ENCODE measurements at regions of chr1 and their contacts with region 1.

Region 1: DNA sequence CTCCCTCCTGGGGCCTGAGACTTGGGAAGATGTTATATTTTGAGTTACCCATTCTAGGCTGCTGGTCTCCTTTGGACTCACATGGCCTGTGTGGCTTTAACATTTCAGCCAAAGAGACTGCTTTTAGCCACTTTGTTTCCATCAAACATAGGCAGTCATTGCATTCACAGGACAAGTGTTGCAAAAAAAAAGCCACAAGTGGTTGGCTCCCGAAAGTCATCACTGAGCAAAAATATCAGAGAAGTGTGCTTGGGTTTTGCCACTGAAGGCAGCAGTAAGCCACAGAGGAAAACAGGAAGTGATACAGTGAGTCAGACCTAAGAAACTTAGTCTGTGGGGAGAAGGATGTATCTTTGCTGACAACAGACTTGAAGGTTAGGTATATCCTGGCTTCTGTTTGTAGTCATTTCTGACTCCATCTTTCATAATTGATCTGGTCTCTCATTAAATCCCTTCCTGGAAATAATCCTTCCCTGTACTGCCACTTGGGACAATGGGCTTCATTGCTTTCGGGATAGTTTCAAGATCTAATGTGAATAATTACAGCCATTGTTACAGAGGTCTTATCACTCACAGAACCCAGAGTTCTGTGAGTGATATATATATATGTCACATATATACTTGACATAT is 80.9 kb downstream of the COLGALT2 start:
- DNase-seq: peak; percentile 73
- ATAC-seq: peak; percentile 97
- H3K4me3 Mint-ChIP-seq: peak overlapping the region; percentile 13
- H3K27ac Mint-ChIP-seq: no peak overlapping the region
- H3K4me1 Mint-ChIP-seq: peaks cover 23% of the 10 kb centered on the region
- H3K27me3 Mint-ChIP-seq: no peaks in the 10 kb centered on the region
- CTCF ChIP-seq: no peak

Region 2: DNA sequence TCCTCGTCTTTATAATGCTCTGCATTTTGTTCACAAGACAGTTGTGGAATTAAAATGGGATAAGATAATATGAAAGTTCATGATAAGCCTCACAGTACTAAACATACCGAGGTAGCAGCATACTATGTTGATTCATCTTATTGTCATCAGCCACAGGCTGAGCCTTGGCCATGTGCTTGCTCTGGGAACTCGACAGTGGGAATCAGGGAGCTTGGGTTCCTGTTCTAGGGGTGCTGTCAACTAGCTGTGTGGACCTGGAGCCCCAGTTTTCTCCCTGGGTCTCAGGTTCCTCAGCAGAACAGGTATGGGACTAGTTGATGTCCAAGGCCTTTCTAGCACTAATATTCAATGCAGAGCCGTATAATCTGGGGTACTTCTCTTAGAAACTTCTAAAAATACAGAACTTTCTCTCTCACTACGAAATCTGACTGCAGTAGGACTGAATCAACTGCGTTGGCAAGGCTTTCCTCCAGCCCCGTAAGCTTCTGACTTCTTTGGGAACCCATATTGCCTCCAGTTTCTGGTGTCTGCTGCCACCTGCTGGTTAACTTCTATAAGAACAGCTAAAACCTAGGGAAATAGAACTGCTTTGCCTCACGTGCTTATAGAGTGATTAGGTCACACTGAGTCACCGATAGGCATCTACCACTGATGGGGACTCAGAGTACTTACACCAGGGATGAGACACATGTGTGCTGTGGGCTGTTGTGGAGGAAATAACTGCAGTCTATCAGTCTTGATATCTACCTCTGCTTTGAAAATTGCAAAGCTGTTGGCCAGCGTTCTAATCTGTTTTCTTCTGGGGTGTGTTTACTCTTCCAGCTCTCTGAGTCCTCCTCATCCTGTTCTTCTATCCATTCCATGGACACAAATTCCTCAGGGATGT is 40.8 kb before region 1 on chr1:
- CTCF ChIA-PET with region 1: interaction called, 10 read pairs
- POLR2A ChIA-PET with region 1: no interaction called
- intact Hi-C with region 1: no loop called
- DNase-seq: peak; percentile 79
- ATAC-seq: peak; percentile 99
- H3K4me3 Mint-ChIP-seq: no peak overlapping the region
- H3K27ac Mint-ChIP-seq: no peak overlapping the region
- H3K4me1 Mint-ChIP-seq: peaks cover 24% of the 10 kb centered on the region
- H3K27me3 Mint-ChIP-seq: no peaks in the 10 kb centered on the region
- CTCF ChIP-seq: peak; percentile 80

Region 3: DNA sequence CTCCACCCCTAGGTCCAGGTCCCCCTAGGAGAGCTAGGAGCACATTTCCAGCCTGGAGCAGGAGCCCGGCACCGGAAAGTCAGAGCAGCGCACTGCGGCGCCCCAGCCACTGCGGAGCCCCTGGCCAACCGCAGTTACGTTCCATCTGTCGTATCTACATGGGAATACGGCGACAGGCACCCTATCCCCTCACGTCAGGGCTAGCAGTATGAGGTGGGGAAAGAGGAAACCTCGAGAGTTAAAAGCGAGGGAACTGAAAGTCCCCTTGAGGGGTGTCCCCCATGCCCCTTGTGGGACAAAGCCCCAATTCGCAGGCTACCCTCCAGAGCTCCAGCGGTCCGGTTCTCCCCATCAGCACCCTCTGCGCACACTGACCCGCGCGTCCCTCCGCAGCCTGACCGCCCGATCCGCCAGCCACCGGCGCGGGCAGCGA is 79.9 kb after region 1 on chr1:
- CTCF ChIA-PET with region 1: interaction called, 3 read pairs
- POLR2A ChIA-PET with region 1: interaction called, 3 read pairs
- intact Hi-C with region 1: loop called (anchors 5 kb)
- DNase-seq: peak; percentile 21
- ATAC-seq: peak; percentile 9
- H3K4me3 Mint-ChIP-seq: peak overlapping the region; percentile 65
- H3K27ac Mint-ChIP-seq: no peak overlapping the region
- H3K4me1 Mint-ChIP-seq: peaks cover 9% of the 10 kb centered on the region
- H3K27me3 Mint-ChIP-seq: peaks cover 54% of the 10 kb centered on the region
- CTCF ChIP-seq: no peak

Region 4: GRCh38 chr1:184163674-184164465 is 207.2 kb after region 1 on chr1:
- CTCF ChIA-PET with region 1: no interaction called
- POLR2A ChIA-PET with region 1: interaction called, 3 read pairs
- intact Hi-C with region 1: loop called (anchors 5 kb)
- DNase-seq: no peak
- ATAC-seq: no peak
- H3K4me3 Mint-ChIP-seq: no peak overlapping the region
- H3K27ac Mint-ChIP-seq: no peak overlapping the region
- H3K4me1 Mint-ChIP-seq: no peaks in the 10 kb centered on the region
- H3K27me3 Mint-ChIP-seq: no peaks in the 10 kb centered on the region
- CTCF ChIP-seq: no peak

Measured in activated CD8-positive, alpha-beta T cell treated with anti-CD3 and anti-CD28 coated beads for 36 hours (primary cell).